ENCODE measurements at regions of chr12 and their contacts with region 1.

Region 1: DNA sequence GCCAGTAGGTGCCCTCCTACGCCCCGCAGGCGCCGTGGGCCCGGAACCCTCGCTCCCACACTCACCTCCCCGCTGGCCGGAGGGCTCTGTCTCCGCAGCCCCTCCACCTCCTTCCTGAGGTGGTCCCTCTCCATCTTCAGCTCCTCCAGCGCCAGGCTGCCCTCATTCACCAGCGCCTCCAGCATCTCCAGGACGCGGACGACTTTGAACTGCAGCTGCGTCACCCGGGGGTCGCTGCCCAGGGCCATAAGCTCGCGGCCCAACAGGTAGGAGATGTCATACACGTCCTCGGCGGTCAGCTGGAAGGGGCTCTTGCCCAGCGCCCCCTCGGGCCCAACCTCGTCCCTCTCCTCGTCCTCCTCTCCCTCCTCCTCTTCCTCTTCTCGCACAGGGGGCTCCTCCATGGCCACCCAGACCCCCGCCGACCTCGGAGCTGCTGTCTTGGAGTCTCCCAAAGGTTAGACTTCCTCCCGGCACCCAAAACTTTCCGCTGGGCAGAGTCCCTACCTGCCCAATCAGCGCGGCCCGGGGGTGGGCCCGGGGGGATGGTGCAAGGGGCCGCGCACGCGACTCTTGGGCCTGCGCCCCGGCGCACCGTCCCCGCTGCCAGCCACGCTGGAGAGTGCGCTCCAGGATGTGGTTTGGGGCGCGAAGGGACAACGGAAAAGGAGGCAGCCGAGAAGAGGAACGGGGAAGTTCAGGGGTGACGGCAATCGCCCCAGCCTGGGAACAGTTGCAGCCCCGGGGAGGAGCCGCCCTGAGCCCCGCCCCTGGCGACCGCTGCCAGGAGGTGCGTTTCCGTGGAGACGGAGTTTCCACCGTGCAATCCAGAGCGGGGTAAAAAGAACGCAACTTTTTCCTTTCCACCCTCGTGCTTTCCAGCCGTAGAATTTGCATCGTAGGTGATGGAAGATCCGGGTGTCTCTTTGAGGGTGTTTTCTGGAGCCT is at the start of gene RILPL2:
- DNase-seq: peak; percentile 80
- H3K4me3 ChIP-seq: peak within 1 kb of the TSS; percentile 79
- H3K27ac ChIP-seq: peak within 1 kb of the TSS; percentile 26
- H3K4me1 ChIP-seq: no peaks in the 10 kb centered on the region
- H3K27me3 ChIP-seq: no peaks in the 10 kb centered on the region
- CTCF ChIP-seq: no peak
- total RNA-seq, gene RILPL2: 1.7 and 1.9 TPM in 2 replicates

Region 2: GRCh38 chr12:123571343-123571813 is 135.1 kb after region 1 on chr12:
- CTCF ChIA-PET with region 1: interaction called, 10 read pairs
- POLR2A ChIA-PET with region 1: no interaction called
- intact Hi-C with region 1: no loop called
- DNase-seq: peak; percentile 80
- H3K4me3 ChIP-seq: no peak overlapping the region
- H3K27ac ChIP-seq: no peak overlapping the region
- H3K4me1 ChIP-seq: no peaks in the 10 kb centered on the region
- H3K27me3 ChIP-seq: no peaks in the 10 kb centered on the region
- CTCF ChIP-seq: no peak

Region 3: DNA sequence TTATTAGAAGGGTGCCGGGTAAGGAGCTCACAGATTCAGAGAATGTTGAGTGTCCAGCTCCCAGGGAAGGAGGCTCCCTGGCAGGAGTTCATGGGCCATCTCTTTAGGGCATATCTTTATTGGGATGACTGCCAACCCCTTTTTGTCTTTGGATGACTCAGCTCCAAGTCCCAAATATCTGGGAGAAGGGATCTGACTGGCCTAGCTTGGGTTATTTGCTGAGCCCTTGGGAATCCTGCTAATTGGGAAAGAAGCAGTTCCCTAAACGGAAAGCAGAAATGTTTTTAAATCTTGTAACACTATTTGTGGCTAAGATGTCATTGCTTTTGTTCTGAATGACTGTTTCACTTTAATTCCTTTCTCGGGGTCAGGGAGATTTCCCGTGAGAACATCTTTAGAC is 178.2 kb after region 1 on chr12:
- CTCF ChIA-PET with region 1: no interaction called
- POLR2A ChIA-PET with region 1: no interaction called
- intact Hi-C with region 1: no loop called
- DNase-seq: peak; percentile 68
- H3K4me3 ChIP-seq: no peak overlapping the region
- H3K27ac ChIP-seq: peak overlapping the region; percentile 35
- H3K4me1 ChIP-seq: no peaks in the 10 kb centered on the region
- H3K27me3 ChIP-seq: no peaks in the 10 kb centered on the region
- CTCF ChIP-seq: no peak

Region 4: DNA sequence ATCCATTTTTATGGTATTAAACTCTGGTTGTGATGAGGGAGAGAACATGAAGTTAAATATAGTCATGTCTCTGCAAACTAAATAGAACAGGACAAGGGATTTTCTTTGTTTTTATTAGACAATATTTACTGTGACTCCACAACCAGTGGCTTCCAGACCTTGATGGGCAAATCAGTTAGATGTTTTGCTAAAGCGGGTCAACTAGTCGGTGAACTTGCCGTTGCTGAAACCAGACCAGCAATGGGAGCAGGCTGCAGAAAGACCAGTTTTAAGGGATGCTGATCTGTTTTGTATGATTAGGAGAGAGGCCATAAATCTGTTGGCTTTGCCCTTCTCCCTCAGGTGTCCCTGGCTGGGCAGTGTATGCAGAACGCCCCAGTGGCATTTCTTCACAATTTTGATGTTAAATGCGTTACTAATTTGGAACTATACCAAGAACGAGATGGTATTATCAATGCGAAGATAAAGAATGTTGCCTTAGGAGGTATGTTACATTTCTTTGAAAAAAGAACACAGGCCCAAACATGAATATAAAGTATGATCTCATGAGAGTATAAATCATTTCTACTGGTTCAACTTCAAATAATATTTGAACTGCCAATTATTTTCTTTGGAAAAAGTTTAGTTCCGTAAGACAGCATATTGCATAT is 254.0 kb after region 1 on chr12:
- CTCF ChIA-PET with region 1: no interaction called
- POLR2A ChIA-PET with region 1: no interaction called
- intact Hi-C with region 1: no loop called
- DNase-seq: no peak
- H3K4me3 ChIP-seq: no peak overlapping the region
- H3K27ac ChIP-seq: no peak overlapping the region
- H3K4me1 ChIP-seq: no peaks in the 10 kb centered on the region
- H3K27me3 ChIP-seq: no peaks in the 10 kb centered on the region
- CTCF ChIP-seq: no peak

Measured in A673 (cell line).